ENCODE measurements at regions of chr2 and their contacts with region 1.

Region 1: DNA sequence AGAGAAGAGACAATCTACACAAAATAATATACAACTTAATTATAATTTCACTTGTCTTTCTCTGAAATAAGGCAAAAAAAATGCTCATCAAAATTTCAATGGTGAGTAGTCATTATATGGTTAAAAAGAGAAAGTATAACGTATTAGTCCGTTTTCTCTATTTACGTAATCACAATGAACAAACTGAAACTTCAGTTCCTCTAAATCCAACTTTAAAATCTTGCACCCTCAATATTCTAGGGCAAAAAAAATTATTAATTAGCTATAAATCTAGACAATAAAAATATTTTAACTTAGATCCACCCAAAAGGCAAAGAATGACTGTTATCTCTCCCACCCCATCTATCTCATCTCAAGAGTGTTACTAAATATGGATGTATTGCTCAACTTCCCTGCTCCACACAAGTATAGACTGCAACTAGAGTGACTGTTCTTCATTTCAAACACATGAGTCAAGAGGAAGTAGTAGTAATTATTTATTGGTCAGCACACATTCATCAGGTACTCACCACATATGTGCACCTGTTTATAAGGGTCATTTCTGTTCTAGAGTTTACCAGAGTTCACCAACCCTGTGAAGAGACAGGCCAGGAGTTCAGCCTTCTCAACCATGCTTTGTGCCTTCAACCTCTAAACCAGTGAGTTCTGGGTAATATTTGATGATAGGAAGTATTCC is 36.4 kb downstream of the STK39 start:
- DNase-seq: no peak
- H3K4me3 Mint-ChIP-seq: peak overlapping the region; percentile 6
- H3K27ac Mint-ChIP-seq: peak overlapping the region; percentile 98
- H3K4me1 Mint-ChIP-seq: peaks cover 63% of the 10 kb centered on the region
- H3K27me3 Mint-ChIP-seq: no peaks in the 10 kb centered on the region

Region 2: GRCh38 chr2:167862787-167863186 is 348.2 kb before region 1 on chr2:
- CTCF ChIA-PET with region 1: no interaction called
- intact Hi-C with region 1: loop called (anchors 2 kb)
- DNase-seq: peak; percentile 30
- H3K4me3 Mint-ChIP-seq: no peak overlapping the region
- H3K27ac Mint-ChIP-seq: peak overlapping the region; percentile 39
- H3K4me1 Mint-ChIP-seq: peaks cover 15% of the 10 kb centered on the region
- H3K27me3 Mint-ChIP-seq: peaks cover 8% of the 10 kb centered on the region

Region 3: GRCh38 chr2:168194784-168195522 is 16.1 kb before region 1 on chr2:
- CTCF ChIA-PET with region 1: interaction called, 21 read pairs
- intact Hi-C with region 1: loop called (anchors 1 kb)
- DNase-seq: peak; percentile 60
- H3K4me3 Mint-ChIP-seq: peak overlapping the region; percentile 53
- H3K27ac Mint-ChIP-seq: peak overlapping the region; percentile 91
- H3K4me1 Mint-ChIP-seq: peaks cover 85% of the 10 kb centered on the region
- H3K27me3 Mint-ChIP-seq: no peaks in the 10 kb centered on the region

Region 4: DNA sequence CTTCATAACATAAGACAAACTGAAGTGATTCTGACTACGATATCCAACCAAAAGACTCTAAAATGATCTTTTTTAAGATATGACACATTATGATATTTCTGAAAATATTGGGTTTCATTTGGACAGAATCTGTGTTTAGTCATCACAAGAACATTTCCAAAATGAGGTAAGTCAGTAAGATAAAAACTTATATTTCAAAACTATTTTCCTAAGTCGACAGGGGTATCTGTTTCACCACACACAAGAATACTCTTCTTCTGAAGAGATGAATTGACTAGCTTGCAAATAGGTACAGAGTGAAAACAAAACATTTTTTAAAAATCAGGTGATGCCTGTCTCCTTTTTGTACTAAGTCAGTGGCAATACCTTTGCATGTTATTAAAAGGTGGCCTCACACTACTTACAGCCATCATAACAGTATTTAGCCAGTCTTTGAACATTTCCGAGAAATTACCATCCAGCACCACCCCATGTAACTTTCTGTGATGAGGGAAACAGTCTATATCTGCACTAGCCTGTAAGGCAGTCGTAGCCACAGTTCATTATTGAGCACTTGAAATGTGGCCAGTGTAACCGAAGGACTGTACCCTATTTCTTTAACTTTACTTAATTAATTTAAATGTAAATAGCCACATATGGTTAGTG is 22.9 kb after region 1 on chr2:
- CTCF ChIA-PET with region 1: interaction called, 4 read pairs
- intact Hi-C with region 1: loop called (anchors 1 kb)
- DNase-seq: no peak
- H3K4me3 Mint-ChIP-seq: peak overlapping the region; percentile 25
- H3K27ac Mint-ChIP-seq: peak overlapping the region; percentile 78
- H3K4me1 Mint-ChIP-seq: peaks cover 49% of the 10 kb centered on the region
- H3K27me3 Mint-ChIP-seq: no peaks in the 10 kb centered on the region

Region 5: GRCh38 chr2:168336864-168337263 is 125.8 kb after region 1 on chr2:
- CTCF ChIA-PET with region 1: interaction called, 6 read pairs
- intact Hi-C with region 1: loop called (anchors 1 kb)
- DNase-seq: peak; percentile 80
- H3K4me3 Mint-ChIP-seq: no peak overlapping the region
- H3K27ac Mint-ChIP-seq: no peak overlapping the region
- H3K4me1 Mint-ChIP-seq: peaks cover 7% of the 10 kb centered on the region
- H3K27me3 Mint-ChIP-seq: no peaks in the 10 kb centered on the region

Region 6: GRCh38 chr2:168583064-168583709 is 372.2 kb after region 1 on chr2:
- CTCF ChIA-PET with region 1: no interaction called
- intact Hi-C with region 1: loop called (anchors 5 kb)
- DNase-seq: peak; percentile 20
- H3K4me3 Mint-ChIP-seq: no peak overlapping the region
- H3K27ac Mint-ChIP-seq: peak overlapping the region; percentile 20
- H3K4me1 Mint-ChIP-seq: peaks cover 62% of the 10 kb centered on the region
- H3K27me3 Mint-ChIP-seq: no peaks in the 10 kb centered on the region

Region 7: GRCh38 chr2:168912901-168913369 is 701.9 kb after region 1 on chr2:
- CTCF ChIA-PET with region 1: no interaction called
- intact Hi-C with region 1: loop called (anchors 1 kb)
- DNase-seq: peak; percentile 10
- H3K4me3 Mint-ChIP-seq: peak overlapping the region; percentile 43
- H3K27ac Mint-ChIP-seq: no peak overlapping the region
- H3K4me1 Mint-ChIP-seq: peaks cover 12% of the 10 kb centered on the region
- H3K27me3 Mint-ChIP-seq: peaks cover 20% of the 10 kb centered on the region

Measured in activated naive CD4-positive, alpha-beta T cell treated with anti-CD3 and anti-CD28 coated beads for 36 hours (primary cell).